ENCODE measurements at regions of chr3 and their contacts with region 1.

Region 1: GRCh38 chr3:34919025-34919424 is 720.3 kb upstream of the ARPP21 start:
- DNase-seq: no peak

Region 2: GRCh38 chr3:34929036-34929435 is 10.0 kb after region 1 on chr3:
- intact Hi-C with region 1: no loop called
- DNase-seq: no peak

Region 3: DNA sequence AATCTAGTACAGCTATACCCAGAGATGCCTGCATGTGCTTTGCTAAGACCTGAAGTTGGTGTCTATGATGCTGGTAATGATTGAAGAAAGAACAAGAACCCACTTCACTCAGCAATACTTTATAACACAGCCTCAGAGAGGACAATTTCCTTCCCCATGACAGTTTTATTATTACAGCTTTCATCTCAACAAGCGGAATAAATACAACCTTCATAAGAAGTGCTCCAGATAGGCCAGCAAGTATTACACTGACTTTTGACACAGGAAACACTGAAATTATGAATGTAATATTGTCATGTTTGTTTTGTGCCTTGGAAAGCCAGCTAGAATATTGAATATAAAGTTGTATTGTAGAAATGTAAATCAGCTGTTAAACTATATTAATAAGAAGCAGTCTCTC is 162.9 kb after region 1 on chr3:
- intact Hi-C with region 1: no loop called
- DNase-seq: no peak

Region 4: DNA sequence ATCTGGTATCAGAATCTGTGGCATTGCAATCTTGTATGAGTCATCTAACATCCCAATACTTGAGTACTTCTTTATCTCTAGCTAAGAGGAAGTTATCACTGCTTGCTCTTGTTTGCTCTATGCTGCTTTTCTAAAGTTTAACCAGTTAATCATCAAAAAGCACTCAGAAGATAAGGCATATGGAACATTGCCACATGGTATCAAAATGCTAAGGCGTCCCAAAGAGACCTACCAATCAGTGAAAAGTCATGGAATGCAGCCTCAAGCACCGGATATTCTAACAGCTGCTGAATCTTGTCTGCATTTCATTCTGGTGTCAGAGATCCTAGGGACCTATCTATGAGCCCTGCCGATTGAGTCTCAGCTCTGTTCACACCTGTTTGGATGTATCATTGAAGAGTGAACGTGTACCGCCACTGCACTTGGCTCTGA is 913.1 kb after region 1 on chr3:
- intact Hi-C with region 1: loop called (anchors 5 kb)
- DNase-seq: no peak